Ovary (tissue), 10 donors: ENCODE measurements at regions of chr9 and their contacts with region 1.

Region 1: GRCh38 chr9:27460226-27461023 is 63.7 kb upstream of the IFNK start:
- DNase-seq: peak in 1 of 5 donors; percentile 39
- H3K4me3 ChIP-seq: no peak overlapping the region
- H3K27ac ChIP-seq: no peak overlapping the region
- H3K4me1 ChIP-seq: peaks cover 8% of the 10 kb centered on the region
- H3K27me3 ChIP-seq: no peaks in the 10 kb centered on the region
- CTCF ChIP-seq: no peak
- EP300 ChIP-seq: no peak
- POLR2A ChIP-seq: no peak

Region 2: GRCh38 chr9:27377147-27377807 is 83.1 kb before region 1 on chr9:
- intact Hi-C with region 1: loop called in 1 of 4 experiments (anchors 10 kb)
- DNase-seq: no peak
- H3K4me3 ChIP-seq: no peak overlapping the region
- H3K27ac ChIP-seq: no peak overlapping the region
- H3K4me1 ChIP-seq: peaks cover 7% of the 10 kb centered on the region
- H3K27me3 ChIP-seq: no peaks in the 10 kb centered on the region
- CTCF ChIP-seq: no peak
- EP300 ChIP-seq: no peak
- POLR2A ChIP-seq: no peak

Region 3: GRCh38 chr9:27473111-27473529 is 12.7 kb after region 1 on chr9:
- intact Hi-C with region 1: loop called in 1 of 4 experiments (anchors 2 kb)
- DNase-seq: peak in 3 of 5 donors; percentile 37 to 67 (median 42)
- H3K4me3 ChIP-seq: no peak overlapping the region
- H3K27ac ChIP-seq: peak overlapping the region; percentile 67 to 68
- H3K4me1 ChIP-seq: peaks cover 55% of the 10 kb centered on the region
- H3K27me3 ChIP-seq: no peaks in the 10 kb centered on the region
- CTCF ChIP-seq: no peak
- EP300 ChIP-seq: no peak
- POLR2A ChIP-seq: no peak